Stomach (tissue), 19 donors: ENCODE measurements at regions of chr5 and their contacts with region 1.

Region 1: GRCh38 chr5:180852495-180852894 is 8.6 kb downstream of the ZFP62 start:
- DNase-seq: no peak
- H3K4me3 ChIP-seq: no peak overlapping the region
- H3K27ac ChIP-seq: no peak overlapping the region
- H3K4me1 ChIP-seq: no peaks in the 10 kb centered on the region
- H3K27me3 ChIP-seq: no peaks in the 10 kb centered on the region
- CTCF ChIP-seq: no peak
- EP300 ChIP-seq: no peak
- POLR2A ChIP-seq: no peak

Region 2: DNA sequence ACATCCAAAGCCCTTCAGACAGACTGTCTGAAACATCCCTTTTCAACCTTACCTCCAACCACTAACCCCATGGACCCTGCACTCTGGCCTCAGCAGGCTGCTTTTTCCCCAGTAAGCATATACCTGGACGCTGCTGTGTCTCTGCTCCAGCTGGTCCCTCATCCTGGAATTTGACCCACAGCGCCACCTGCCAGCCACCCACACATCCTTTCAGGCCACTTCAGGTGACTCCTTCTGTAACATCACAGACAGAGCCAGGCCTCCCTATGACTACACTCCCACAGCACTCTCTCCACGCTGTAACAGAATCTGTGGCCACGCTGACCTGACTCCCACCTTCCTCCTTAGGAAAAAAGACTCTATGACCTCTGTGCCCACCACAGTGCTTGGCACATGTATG is 53.3 kb before region 1 on chr5:
- intact Hi-C with region 1: loop called (anchors 10 kb)
- DNase-seq: peak; percentile 58 to 66
- H3K4me3 ChIP-seq: peak overlapping the region in 1 of 4 donors; percentile 81
- H3K27ac ChIP-seq: peak overlapping the region in 3 of 5 donors; percentile 52 to 99 (median 99)
- H3K4me1 ChIP-seq: peaks cover 78 to 91% (median 87%) of the 10 kb centered on the region in 4 donors
- H3K27me3 ChIP-seq: no peaks in the 10 kb centered on the region
- CTCF ChIP-seq: peak in 2 of 7 experiments; percentile 24 to 35
- EP300 ChIP-seq: no peak
- POLR2A ChIP-seq: no peak

Region 3: GRCh38 chr5:181100121-181101015 is 247.9 kb after region 1 on chr5:
- intact Hi-C with region 1: no loop called
- DNase-seq: peak in 1 of 2 donors; percentile 16
- H3K4me3 ChIP-seq: peak overlapping the region in 1 of 4 donors; percentile 5
- H3K27ac ChIP-seq: no peak overlapping the region
- H3K4me1 ChIP-seq: peaks cover 0 to 8% (median 6%) of the 10 kb centered on the region in 4 donors
- H3K27me3 ChIP-seq: peaks cover 9 to 53% (median 29%) of the 10 kb centered on the region in 3 donors
- CTCF ChIP-seq: no peak
- EP300 ChIP-seq: no peak
- POLR2A ChIP-seq: no peak